PC-9 (cell line): ENCODE measurements at regions of chr15 and their contacts with region 1.

Region 1: GRCh38 chr15:56098195-56098863 is 104.9 kb upstream of the NEDD4 start:
- DNase-seq: no peak
- H3K4me3 ChIP-seq: no peak overlapping the region
- H3K27ac ChIP-seq: no peak overlapping the region
- H3K4me1 ChIP-seq: no peaks in the 10 kb centered on the region
- H3K27me3 ChIP-seq: no peaks in the 10 kb centered on the region
- CTCF ChIP-seq: peak; percentile 35; the same call in 1 of the 2 replicates

Region 2: DNA sequence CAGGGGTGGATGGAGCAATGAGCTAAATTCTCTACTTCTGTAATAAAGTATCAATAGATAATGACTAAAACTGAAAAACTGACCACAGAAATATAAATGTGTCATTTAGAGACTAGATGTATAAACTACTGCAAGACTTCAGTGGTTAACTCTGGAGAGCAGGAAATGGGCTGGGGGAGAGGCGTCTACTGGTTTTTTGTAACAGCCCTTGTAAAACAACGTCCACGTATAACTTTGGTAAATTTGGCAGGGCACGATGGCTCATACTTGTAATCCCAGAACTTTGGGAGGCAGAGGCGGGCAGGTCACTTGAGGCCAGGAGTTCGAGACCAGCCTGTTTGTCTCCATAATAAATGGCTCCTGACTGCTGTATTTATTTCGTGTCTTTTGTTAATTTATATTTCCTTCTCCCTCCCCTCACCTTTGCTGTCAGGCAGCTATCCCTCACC is 821.2 kb before region 1 on chr15:
- CTCF ChIA-PET with region 1: no interaction called
- POLR2A ChIA-PET with region 1: no interaction called
- intact Hi-C with region 1: no loop called
- DNase-seq: no peak
- H3K4me3 ChIP-seq: no peak overlapping the region
- H3K27ac ChIP-seq: no peak overlapping the region
- H3K4me1 ChIP-seq: peaks cover 26% of the 10 kb centered on the region
- H3K27me3 ChIP-seq: no peaks in the 10 kb centered on the region
- CTCF ChIP-seq: no peak

Region 3: GRCh38 chr15:55823191-55823670 is 275.1 kb before region 1 on chr15:
- CTCF ChIA-PET with region 1: no interaction called
- POLR2A ChIA-PET with region 1: no interaction called
- intact Hi-C with region 1: no loop called
- DNase-seq: no peak
- H3K4me3 ChIP-seq: no peak overlapping the region
- H3K27ac ChIP-seq: no peak overlapping the region
- H3K4me1 ChIP-seq: no peaks in the 10 kb centered on the region
- H3K27me3 ChIP-seq: no peaks in the 10 kb centered on the region
- CTCF ChIP-seq: no peak

Region 4: GRCh38 chr15:55917881-55918296 is 180.4 kb before region 1 on chr15:
- CTCF ChIA-PET with region 1: no interaction called
- POLR2A ChIA-PET with region 1: no interaction called
- intact Hi-C with region 1: loop called (anchors 5 kb)
- DNase-seq: peak; percentile 23 to 84
- H3K4me3 ChIP-seq: no peak overlapping the region
- H3K27ac ChIP-seq: peak overlapping the region; percentile 58
- H3K4me1 ChIP-seq: peaks cover 9% of the 10 kb centered on the region
- H3K27me3 ChIP-seq: no peaks in the 10 kb centered on the region
- CTCF ChIP-seq: peak; percentile 68

Region 5: GRCh38 chr15:55993111-55993803 is 105.1 kb before region 1 on chr15 and contains the start of gene NEDD4:
- CTCF ChIA-PET with region 1: no interaction called
- POLR2A ChIA-PET with region 1: no interaction called
- intact Hi-C with region 1: loop called (anchors 5 kb)
- DNase-seq: peak; percentile 52 to 87
- H3K4me3 ChIP-seq: peak within 1 kb of the TSS; percentile 81
- H3K27ac ChIP-seq: peak within 1 kb of the TSS; percentile 26; the same call in 1 of the 2 replicates
- H3K4me1 ChIP-seq: peaks cover 14% of the 10 kb centered on the region
- H3K27me3 ChIP-seq: no peaks in the 10 kb centered on the region
- CTCF ChIP-seq: no peak
- total RNA-seq, gene NEDD4: 17.8 and 24.5 TPM in 2 replicates

Region 6: GRCh38 chr15:56052395-56053045 is 45.8 kb before region 1 on chr15:
- CTCF ChIA-PET with region 1: no interaction called
- POLR2A ChIA-PET with region 1: no interaction called
- intact Hi-C with region 1: loop called (anchors 5 kb)
- DNase-seq: peak in 1 of 2 experiments; percentile 41
- H3K4me3 ChIP-seq: no peak overlapping the region
- H3K27ac ChIP-seq: peak overlapping the region; percentile 46
- H3K4me1 ChIP-seq: no peaks in the 10 kb centered on the region; the same call in 1 of the 2 replicates
- H3K27me3 ChIP-seq: no peaks in the 10 kb centered on the region
- CTCF ChIP-seq: peak; percentile 80

Region 7: DNA sequence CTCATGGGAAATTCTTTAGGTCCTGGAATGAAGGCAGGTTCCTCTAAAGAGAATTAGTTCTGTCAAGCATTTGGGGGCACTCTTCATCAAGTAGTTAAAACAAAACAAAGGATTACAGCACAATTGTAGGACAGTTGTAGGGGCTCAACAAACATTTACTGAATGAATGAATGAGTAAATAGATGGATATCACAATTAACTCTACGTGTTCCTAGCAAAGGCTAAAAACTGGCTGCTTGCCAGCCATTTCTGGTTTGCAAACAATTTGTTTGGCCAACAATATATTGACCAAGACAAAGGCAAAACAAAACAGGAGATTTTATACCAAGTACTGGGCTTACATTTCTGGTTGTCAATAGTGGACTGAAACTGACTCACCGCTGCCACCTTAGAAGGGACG is 518.2 kb after region 1 on chr15:
- CTCF ChIA-PET with region 1: interaction called, 10 read pairs
- POLR2A ChIA-PET with region 1: no interaction called
- intact Hi-C with region 1: no loop called
- DNase-seq: no peak
- H3K4me3 ChIP-seq: no peak overlapping the region
- H3K27ac ChIP-seq: no peak overlapping the region
- H3K4me1 ChIP-seq: no peaks in the 10 kb centered on the region
- H3K27me3 ChIP-seq: no peaks in the 10 kb centered on the region
- CTCF ChIP-seq: no peak